ENCODE measurements at regions of chr15 and their contacts with region 1.

Region 1: GRCh38 chr15:45587095-45587860 is at the start of gene BLOC1S6:
- DNase-seq: peak; percentile 90 to 96 (median 94)
- ATAC-seq: peak; percentile 90
- H3K4me3 ChIP-seq: peak within 1 kb of the TSS; percentile 80
- H3K27ac ChIP-seq: peak within 1 kb of the TSS; percentile 93
- H3K4me1 ChIP-seq: peaks cover 0 to 17% of the 10 kb centered on the region in 2 experiments; a peak in 3 of 5 replicates
- H3K27me3 ChIP-seq: no peaks in the 10 kb centered on the region
- CTCF ChIP-seq: no peak
- EP300 ChIP-seq: peak; percentile 48; the same call in 1 of the 2 replicates
- POLR2A ChIP-seq: peak; percentile 96
- RAD21 ChIP-seq: no peak
- polyA plus RNA-seq, gene BLOC1S6: 18.2 to 20.3 TPM

Region 2: DNA sequence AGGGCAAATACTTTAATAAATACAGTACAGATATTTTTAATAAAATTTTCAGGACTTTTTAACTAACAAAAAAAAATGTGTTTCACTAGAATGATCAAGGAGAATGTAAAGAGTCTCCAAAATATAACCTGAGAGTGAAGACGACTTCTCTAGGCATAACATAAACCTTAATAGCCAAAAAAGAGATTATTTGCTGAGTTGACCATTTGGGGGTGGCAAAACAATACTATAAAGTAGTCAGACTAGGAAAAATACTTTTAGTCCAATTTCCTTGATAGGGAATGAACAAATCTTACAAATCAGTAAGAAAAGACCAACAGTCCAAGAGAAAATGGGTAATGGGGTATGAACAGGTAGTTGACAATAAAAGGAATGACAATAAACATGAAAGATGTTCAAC is 179.5 kb before region 1 on chr15:
- CTCF ChIA-PET with region 1: no interaction called
- POLR2A ChIA-PET with region 1: no interaction called
- in situ Hi-C with region 1: no loop called
- intact Hi-C with region 1: no loop called
- DNase-seq: no peak
- ATAC-seq: no peak
- H3K4me3 ChIP-seq: no peak overlapping the region
- H3K27ac ChIP-seq: no peak overlapping the region
- H3K4me1 ChIP-seq: peaks cover 7 to 9% of the 10 kb centered on the region in 2 experiments; a peak in 1 of 5 replicates
- H3K27me3 ChIP-seq: no peaks in the 10 kb centered on the region
- CTCF ChIP-seq: no peak
- EP300 ChIP-seq: no peak
- POLR2A ChIP-seq: no peak
- RAD21 ChIP-seq: no peak

Region 3: DNA sequence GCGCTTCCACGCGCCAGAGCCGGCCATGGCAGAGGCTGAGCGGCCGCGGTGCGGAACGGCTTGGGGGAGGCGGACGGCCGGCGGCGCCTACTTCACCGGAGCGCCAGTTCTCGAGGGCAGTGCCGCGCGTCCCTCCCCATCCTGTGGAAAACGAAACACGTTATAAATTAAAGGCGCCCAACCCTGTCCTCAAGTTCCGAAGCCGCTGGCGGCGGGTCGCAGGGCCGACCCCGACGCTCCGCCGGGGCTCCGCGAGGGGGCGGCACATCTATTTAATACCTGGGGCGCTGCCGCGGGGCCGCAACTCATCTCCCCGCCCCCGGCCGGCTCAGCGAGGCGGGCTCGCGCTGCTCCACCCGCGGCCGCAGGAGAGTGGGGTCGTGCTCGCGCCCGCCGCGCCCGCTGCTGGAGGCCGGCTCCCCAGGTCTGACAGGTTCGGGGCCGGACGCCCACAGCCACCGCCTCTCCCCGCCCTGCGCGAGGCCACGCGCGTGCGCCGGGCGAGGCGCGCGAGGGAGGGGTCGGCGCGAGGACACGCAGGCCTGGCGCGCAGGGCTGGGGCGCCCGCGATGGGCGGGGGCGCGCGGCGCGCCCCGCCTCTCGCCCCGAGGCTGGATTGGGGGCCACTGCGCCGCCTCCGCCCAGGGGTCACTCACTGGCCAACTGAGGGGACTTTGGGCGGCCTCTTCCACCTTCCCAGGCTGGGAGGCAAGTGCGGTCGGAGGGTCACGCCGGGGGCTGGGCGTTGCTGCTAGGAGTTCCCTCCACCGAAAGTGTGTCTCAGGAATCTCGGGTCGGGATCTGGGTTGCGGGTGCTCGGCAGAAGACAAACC is 64.7 kb before region 1 on chr15 and contains the start of gene SLC30A4:
- CTCF ChIA-PET with region 1: no interaction called
- POLR2A ChIA-PET with region 1: no interaction called
- in situ Hi-C with region 1: no loop called
- intact Hi-C with region 1: loop called (anchors 5 kb)
- DNase-seq: peak; percentile 69 to 87 (median 78)
- ATAC-seq: peak; percentile 94
- H3K4me3 ChIP-seq: peak within 1 kb of the TSS; percentile 53
- H3K27ac ChIP-seq: no peak within 1 kb of the TSS
- H3K4me1 ChIP-seq: peaks cover 9 to 16% of the 10 kb centered on the region in 2 experiments; a peak in 4 of 5 replicates
- H3K27me3 ChIP-seq: peaks cover 0 to 18% of the 10 kb centered on the region in 2 experiments; a peak in 3 of 5 replicates
- CTCF ChIP-seq: peak in 2 of 3 experiments; percentile 27 to 44; a peak in 4 of 6 replicates
- EP300 ChIP-seq: no peak
- POLR2A ChIP-seq: no peak
- RAD21 ChIP-seq: peak; percentile 23 to 35; a peak in 2 of 4 replicates
- polyA plus RNA-seq, gene SLC30A4: 0.21 to 0.30 TPM

Region 4: GRCh38 chr15:45573961-45574629 is 13.2 kb before region 1 on chr15:
- CTCF ChIA-PET with region 1: no interaction called
- POLR2A ChIA-PET with region 1: interaction called, 11 read pairs
- in situ Hi-C with region 1: no loop called
- intact Hi-C with region 1: no loop called
- DNase-seq: peak; percentile 19 to 45 (median 30)
- ATAC-seq: peak; percentile 95
- H3K4me3 ChIP-seq: no peak overlapping the region
- H3K27ac ChIP-seq: no peak overlapping the region
- H3K4me1 ChIP-seq: peaks cover 0 to 4% of the 10 kb centered on the region in 2 experiments; a peak in 1 of 5 replicates
- H3K27me3 ChIP-seq: peaks cover 0 to 5% of the 10 kb centered on the region in 2 experiments; a peak in 3 of 5 replicates
- CTCF ChIP-seq: peak; percentile 49 to 64 (median 55)
- EP300 ChIP-seq: no peak
- POLR2A ChIP-seq: no peak
- RAD21 ChIP-seq: peak in 1 of 2 experiments; percentile 48; a peak in 2 of 4 replicates

Measured in K562 (cell line).